Cardiac septum (tissue), 1 donor: ENCODE measurements at regions of chr10 and their contacts with region 1.

Region 1: GRCh38 chr10:100346765-100347567 is at the start of gene SCD:
- DNase-seq: peak; percentile 93
- total RNA-seq, gene SCD: 16.8 TPM

Region 2: GRCh38 chr10:100267237-100268104 is 79.5 kb before region 1 on chr10 and contains the start of gene CWF19L1:
- intact Hi-C with region 1: no loop called
- DNase-seq: peak; percentile 94
- total RNA-seq, gene CWF19L1: 15.9 TPM

Region 3: GRCh38 chr10:100373298-100374136 is 26.6 kb after region 1 on chr10:
- intact Hi-C with region 1: loop called (anchors 2 kb)
- DNase-seq: peak; percentile 98

Region 4: GRCh38 chr10:100518761-100519241 is 171.8 kb after region 1 on chr10:
- intact Hi-C with region 1: loop called (anchors 10 kb)
- DNase-seq: no peak